Colonic mucosa (tissue), 4 donors: ENCODE measurements at regions of chr5 and their contacts with region 1.

Region 1: DNA sequence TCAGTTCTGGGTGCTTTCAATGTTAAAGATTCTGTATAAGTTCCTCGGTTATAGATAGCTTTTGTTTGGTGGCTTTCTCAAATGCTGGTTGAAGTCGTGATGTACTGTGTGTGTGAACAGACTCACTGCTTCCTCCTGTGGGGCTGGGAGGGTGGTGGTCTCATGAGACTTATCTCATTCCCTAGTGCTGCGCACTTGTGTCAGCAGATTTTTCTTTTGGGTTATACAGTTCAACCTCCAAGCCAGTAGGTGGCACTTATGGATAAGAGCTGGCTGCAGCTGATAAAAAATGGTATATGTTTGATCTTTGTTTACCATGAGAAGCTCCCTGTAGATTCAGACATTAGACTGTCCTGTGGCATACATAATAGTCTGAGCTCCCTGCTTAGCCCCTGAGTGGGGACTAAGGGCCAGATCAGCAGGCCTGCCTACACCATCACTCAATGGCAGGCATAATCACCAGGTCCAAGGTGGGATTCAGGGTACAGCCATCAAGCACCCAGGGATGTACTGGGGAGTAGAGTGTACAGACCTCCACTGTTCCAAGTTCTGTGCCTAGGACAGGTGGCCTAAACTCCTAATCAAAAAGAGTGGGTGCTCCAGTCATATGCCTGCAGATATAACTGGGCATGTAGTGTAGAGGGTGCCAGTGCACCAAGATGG is 174.2 kb downstream of the OXCT1 start:
- DNase-seq: no peak
- H3K4me3 ChIP-seq: no peak overlapping the region
- H3K27ac ChIP-seq: no peak overlapping the region
- H3K4me1 ChIP-seq: no peaks in the 10 kb centered on the region
- H3K27me3 ChIP-seq: no peaks in the 10 kb centered on the region
- CTCF ChIP-seq: no peak

Region 2: DNA sequence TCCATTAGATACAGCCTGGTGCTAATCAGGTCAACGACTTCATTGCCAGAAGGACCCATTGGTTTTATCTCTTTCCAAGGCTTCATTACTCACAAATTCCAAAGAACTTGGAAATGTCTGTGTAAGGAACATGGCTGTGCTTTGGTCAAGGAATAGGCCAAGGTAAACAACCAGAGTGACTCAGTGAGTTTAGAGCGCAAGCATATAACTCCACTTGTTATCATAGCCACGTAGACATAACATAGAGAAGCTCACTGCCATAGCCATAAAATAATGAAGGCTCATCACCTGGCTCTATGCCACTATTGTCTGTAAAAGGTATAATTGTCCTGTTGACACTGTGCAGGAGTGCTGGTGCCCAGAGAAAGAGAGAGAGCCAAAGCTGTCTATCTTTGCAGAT is 46.4 kb before region 1 on chr5:
- intact Hi-C with region 1: no loop called
- DNase-seq: no peak
- H3K4me3 ChIP-seq: no peak overlapping the region
- H3K27ac ChIP-seq: no peak overlapping the region
- H3K4me1 ChIP-seq: no peaks in the 10 kb centered on the region
- H3K27me3 ChIP-seq: no peaks in the 10 kb centered on the region
- CTCF ChIP-seq: no peak

Region 3: DNA sequence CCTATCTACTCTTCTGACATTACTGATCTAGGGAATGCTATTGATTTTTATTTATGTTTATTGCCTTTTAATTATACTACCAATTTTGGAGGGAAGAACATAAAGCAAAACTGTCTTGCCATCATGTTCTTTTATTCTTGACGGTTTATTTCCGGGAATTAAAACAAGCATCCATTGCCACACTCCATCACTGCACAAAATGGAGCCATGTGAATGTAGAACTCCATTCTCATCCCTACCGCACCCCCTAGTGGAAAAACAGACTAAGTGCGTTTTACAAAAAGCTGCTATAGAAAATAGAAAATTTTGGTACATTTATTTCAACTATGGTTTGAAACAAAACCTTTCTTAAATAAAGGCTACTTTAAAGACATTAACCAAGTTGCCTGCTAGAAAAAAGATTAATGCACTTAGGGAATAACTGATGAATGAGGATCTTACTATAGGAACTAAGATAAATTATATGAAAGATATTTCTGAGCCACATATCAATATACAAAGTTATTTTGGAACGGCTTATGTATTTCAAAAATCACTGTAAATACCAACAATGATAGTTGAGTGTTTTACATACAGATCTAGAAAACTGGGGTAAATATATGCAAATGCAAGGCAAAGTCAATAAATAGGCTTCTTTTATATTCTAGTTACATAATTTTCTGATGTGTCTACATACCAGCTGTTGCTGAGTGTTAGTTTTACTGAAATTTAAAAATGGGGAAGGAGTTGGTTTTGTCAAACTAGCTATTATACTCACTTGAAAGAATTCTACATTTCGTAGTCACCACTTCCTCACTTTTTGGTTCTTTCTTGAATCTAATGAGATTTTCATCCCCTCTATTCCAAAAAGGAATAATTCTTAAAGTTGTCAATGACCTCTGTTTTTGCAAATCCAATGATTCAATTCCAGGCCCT is 147.7 kb after region 1 on chr5:
- intact Hi-C with region 1: loop called (anchors 5 kb)
- DNase-seq: peak; percentile 57
- H3K4me3 ChIP-seq: no peak overlapping the region
- H3K27ac ChIP-seq: no peak overlapping the region
- H3K4me1 ChIP-seq: no peaks in the 10 kb centered on the region
- H3K27me3 ChIP-seq: no peaks in the 10 kb centered on the region
- CTCF ChIP-seq: peak; percentile 84